HepG2 (cell line): ENCODE measurements at regions of chr22 and their contacts with region 1.

Region 1: GRCh38 chr22:23097412-23098229 is 27.3 kb downstream of the GNAZ start:
- DNase-seq: no peak
- ATAC-seq: no peak
- H3K4me3 ChIP-seq: no peak overlapping the region
- H3K27ac ChIP-seq: no peak overlapping the region
- H3K4me1 ChIP-seq: no peaks in the 10 kb centered on the region
- H3K27me3 ChIP-seq: no peaks in the 10 kb centered on the region
- CTCF ChIP-seq: no peak
- EP300 ChIP-seq: no peak
- POLR2A ChIP-seq: no peak
- RAD21 ChIP-seq: no peak

Region 2: DNA sequence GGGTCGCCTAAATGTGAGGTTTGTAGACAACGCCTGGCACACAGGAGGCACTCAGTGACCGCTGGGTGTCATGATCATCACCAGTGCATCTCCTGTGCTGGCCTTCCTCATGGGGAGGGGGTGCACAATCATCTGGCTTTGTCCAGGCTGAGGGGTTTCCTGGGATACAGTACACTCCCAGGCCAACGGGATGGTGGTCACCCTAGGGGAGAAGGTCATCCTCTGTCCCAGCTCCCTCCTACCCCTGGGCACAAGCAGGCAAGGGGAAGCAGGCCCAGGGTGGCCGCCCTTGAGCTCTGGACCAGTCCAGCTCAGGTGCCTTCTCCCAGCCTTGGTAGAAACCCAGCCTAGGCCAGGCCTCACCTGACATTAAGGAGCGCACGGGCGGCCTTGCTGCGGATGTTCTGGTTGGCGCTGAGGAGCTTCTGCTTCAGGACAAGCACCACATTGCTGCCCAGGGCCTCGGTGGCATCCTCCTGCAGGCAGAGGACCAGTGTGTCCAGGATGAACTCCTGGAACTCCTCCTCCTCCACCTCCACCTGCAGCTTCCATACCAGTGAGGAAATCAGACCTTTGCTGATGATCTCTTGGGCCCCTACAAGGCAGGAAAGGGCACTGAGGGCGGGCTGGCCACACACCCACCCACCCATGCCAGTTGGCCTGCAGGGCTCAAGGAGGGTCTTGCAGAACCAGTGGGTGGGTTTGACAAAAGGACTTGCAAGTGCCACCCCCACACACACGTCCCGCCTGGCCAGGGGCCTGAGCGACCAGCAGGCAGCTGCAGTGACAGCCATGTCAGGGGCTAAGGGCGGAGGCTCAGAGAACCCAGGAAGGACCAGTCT is 33.9 kb before region 1 on chr22:
- CTCF ChIA-PET with region 1: no interaction called
- POLR2A ChIA-PET with region 1: no interaction called
- in situ Hi-C with region 1: no loop called
- intact Hi-C with region 1: loop called (anchors 2 kb)
- DNase-seq: no peak
- ATAC-seq: no peak
- H3K4me3 ChIP-seq: no peak overlapping the region
- H3K27ac ChIP-seq: no peak overlapping the region
- H3K4me1 ChIP-seq: peaks cover 9% of the 10 kb centered on the region
- H3K27me3 ChIP-seq: peaks cover 2 to 72% of the 10 kb centered on the region in 2 experiments; a peak in 4 of 5 replicates
- CTCF ChIP-seq: no peak
- EP300 ChIP-seq: no peak
- POLR2A ChIP-seq: no peak
- RAD21 ChIP-seq: no peak